Upper lobe of right lung (tissue), 1 donor: ENCODE measurements at regions of chr11 and their contacts with region 1.

Region 1: DNA sequence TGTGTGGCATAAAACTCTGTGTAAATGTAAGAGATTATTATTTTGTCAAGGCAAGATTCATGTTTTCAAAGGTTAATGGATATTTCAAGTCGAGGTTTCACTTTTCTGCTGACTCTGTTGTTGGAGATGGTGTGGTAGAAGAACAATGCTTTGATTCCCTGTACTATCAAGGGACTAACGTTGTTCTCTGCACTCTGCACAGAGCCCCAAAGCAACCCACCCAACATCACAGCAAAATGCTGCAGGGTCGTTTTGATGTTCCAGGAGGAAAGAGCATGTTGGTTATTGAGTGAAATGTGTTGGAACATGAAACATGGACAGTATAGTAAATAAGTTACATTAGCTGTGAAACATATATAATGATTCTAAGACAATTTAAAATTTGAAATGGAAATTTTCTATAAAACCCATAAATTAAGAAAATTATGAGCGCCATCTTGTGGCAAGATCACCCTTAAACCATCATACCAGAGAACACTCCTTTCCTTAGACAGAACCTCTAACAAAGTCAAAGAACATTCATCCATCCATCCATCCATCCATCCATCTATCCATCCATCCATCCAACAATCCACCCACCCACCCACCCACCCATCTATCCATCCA is 164.4 kb upstream of the ZBED5 start:
- DNase-seq: no peak
- ATAC-seq: no peak
- H3K4me3 ChIP-seq: no peak overlapping the region
- H3K27ac ChIP-seq: no peak overlapping the region
- H3K4me1 ChIP-seq: no peaks in the 10 kb centered on the region
- H3K27me3 ChIP-seq: no peaks in the 10 kb centered on the region
- CTCF ChIP-seq: peak; percentile 53

Region 2: GRCh38 chr11:10792398-10792975 is 229.7 kb before region 1 on chr11:
- intact Hi-C with region 1: loop called (anchors 5 kb)
- DNase-seq: peak; percentile 96
- ATAC-seq: peak; percentile 99
- H3K4me3 ChIP-seq: no peak overlapping the region
- H3K27ac ChIP-seq: no peak overlapping the region
- H3K4me1 ChIP-seq: peaks cover 5% of the 10 kb centered on the region
- H3K27me3 ChIP-seq: no peaks in the 10 kb centered on the region
- CTCF ChIP-seq: peak; percentile 91

Region 3: DNA sequence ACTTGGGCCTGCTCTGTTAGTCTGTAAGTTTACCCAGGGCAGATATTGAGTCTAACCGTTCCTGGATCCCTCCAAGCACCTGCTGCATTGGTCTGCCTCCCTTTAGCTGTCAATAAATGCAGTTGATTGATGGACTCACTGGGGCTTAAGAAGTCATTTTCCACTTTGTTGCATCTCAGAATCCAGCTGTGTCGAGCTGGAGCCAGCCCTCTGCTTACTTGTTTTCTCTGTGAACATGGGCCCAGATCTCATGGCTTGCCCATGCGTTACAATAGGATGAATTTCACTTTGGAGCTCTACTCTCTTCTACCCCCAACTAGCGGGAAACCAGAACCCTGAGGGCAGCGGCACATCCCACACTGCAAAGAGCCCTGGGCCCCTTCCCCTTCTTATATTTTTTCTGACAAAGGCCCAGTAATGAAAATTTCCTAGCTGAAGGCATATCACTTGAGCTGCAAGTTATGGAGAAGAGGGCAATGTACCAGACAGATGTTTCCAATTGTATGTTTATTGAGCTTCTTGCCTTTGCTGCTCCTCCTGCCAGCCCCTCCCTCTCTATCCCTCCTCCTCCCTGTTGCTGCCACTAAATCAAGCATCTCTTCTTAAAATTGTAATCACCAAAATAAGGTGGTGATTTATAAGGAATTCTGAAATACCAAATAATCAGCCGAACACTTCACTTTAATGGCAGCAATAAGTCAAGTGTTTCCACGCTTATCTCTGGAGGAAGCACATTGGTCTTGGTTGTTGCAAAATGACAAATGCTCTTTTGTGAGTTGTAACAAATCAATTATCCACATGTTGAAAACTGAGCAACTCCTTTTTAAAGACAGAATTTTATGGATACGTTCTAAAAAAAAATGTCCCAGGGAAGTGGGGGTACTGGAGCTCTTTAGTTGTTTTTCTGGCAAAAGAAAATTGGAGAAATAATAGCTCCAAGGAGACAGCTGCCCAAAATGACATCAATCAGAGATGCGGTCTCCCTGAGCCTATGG is 47.9 kb after region 1 on chr11:
- intact Hi-C with region 1: no loop called
- DNase-seq: no peak
- ATAC-seq: no peak
- H3K4me3 ChIP-seq: no peak overlapping the region
- H3K27ac ChIP-seq: no peak overlapping the region
- H3K4me1 ChIP-seq: no peaks in the 10 kb centered on the region
- H3K27me3 ChIP-seq: no peaks in the 10 kb centered on the region
- CTCF ChIP-seq: no peak

Region 4: DNA sequence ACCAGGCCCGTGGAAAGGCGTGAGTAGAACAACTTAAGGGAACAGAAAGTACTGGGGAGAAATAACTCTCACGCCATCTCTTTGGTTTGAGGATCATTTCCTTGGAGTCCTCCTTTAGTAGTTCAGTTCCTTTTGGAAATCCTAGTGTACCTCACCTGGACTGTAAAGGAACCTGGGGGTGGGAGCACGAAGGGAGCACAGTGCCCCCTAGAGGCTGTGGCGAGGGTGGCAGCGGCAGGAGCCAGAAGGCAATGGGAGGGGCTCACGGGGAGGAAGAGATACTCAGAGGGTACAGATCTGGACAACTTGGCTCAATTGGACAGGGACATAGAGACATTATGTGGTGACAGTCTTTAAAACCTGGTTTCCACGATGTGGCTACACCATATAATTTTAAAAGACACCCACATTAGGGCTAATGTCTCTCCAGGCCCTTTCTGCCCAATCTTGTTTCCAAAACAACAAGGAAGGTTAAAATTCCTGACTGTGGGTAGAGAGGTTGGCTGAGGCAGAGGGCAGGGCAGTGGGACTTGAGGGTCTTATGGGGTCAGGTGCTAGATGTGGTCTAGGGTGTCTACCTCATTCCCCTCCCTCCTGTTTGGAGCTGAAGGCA is 243.9 kb after region 1 on chr11:
- intact Hi-C with region 1: no loop called
- DNase-seq: peak; percentile 80
- ATAC-seq: peak; percentile 85
- H3K4me3 ChIP-seq: no peak overlapping the region
- H3K27ac ChIP-seq: no peak overlapping the region
- H3K4me1 ChIP-seq: peaks cover 6% of the 10 kb centered on the region
- H3K27me3 ChIP-seq: no peaks in the 10 kb centered on the region
- CTCF ChIP-seq: peak; percentile 77